T-cell (primary cell): ENCODE measurements at regions of chr6 and their contacts with region 1.

Region 1: GRCh38 chr6:161370880-161371279 is 97.0 kb upstream of the AGPAT4 start:
- DNase-seq: peak; percentile 25 to 80 (median 60)
- ATAC-seq: peak; percentile 69 to 89 (median 78)
- H3K4me3 ChIP-seq: no peak overlapping the region
- H3K4me3 Mint-ChIP-seq: no peak overlapping the region
- H3K27ac ChIP-seq: no peak overlapping the region
- H3K27ac Mint-ChIP-seq: no peak overlapping the region
- H3K4me1 ChIP-seq: no peaks in the 10 kb centered on the region
- H3K4me1 Mint-ChIP-seq: no peaks in the 10 kb centered on the region
- H3K27me3 ChIP-seq: no peaks in the 10 kb centered on the region
- H3K27me3 Mint-ChIP-seq: no peaks in the 10 kb centered on the region

Region 2: DNA sequence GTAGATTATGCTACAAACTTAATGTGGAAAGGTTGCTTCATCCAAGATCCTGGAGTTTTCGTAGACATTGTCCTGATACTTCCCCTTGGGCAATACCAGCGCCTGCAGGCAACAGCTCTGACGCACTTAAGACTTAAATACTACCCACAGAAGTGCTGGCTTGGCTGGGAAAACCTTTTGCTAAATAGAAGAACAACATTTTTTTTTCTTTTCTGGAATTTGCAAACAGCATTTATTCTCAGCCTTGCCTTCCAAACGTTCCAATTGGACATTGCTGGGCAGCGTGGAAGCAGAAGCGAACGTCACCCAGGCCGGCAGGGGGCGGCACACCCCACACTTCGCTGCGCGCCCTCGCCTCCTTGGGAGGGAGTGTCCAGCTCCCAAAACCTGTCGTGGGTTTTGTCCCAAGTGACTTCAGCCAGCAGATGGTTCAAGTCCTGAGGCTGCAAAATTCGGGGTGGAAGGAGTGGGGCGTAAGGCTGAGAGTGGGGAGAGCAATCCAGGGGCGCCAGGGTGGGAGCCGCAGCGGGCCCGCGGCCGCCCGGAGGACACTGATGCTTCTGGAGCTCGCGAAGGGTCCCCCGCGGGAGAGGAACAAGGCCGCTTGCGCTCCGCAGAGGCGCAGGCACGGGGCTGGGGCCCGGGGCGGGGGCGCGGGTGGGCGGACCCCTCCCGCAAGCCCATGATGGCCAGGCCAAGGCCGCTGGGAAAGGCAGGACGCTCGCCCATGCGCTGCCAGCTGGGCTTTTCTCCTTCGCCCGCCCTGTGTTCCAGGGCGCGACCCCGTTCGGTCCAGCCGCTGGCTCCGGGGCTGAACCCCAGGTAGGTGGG is 440.1 kb before region 1 on chr6:
- CTCF ChIA-PET with region 1: interaction called, 19 to 138 read pairs
- POLR2A ChIA-PET with region 1: no interaction called
- DNase-seq: peak in 31 of 35 experiments; percentile 1 to 69 (median 32)
- ATAC-seq: peak; percentile 47 to 69 (median 57)
- H3K4me3 ChIP-seq: peak overlapping the region; percentile 23 to 33
- H3K4me3 Mint-ChIP-seq: peak overlapping the region; percentile 11 to 50 (median 49)
- H3K27ac ChIP-seq: no peak overlapping the region
- H3K27ac Mint-ChIP-seq: no peak overlapping the region
- H3K4me1 ChIP-seq: peaks cover 0 to 9% of the 10 kb centered on the region in 2 experiments
- H3K4me1 Mint-ChIP-seq: peaks cover 0 to 11% (median 6%) of the 10 kb centered on the region in 3 donors
- H3K27me3 ChIP-seq: peaks cover 12 to 29% of the 10 kb centered on the region in 2 experiments
- H3K27me3 Mint-ChIP-seq: peaks cover 22 to 36% of the 10 kb centered on the region in 2 donors

Region 3: GRCh38 chr6:161101517-161101916 is 269.4 kb before region 1 on chr6:
- CTCF ChIA-PET with region 1: interaction called, 3 to 10 read pairs
- POLR2A ChIA-PET with region 1: no interaction called
- DNase-seq: peak in 1 of 35 experiments; percentile 15
- ATAC-seq: no peak
- H3K4me3 ChIP-seq: no peak overlapping the region
- H3K4me3 Mint-ChIP-seq: no peak overlapping the region
- H3K27ac ChIP-seq: no peak overlapping the region
- H3K27ac Mint-ChIP-seq: no peak overlapping the region
- H3K4me1 ChIP-seq: no peaks in the 10 kb centered on the region
- H3K4me1 Mint-ChIP-seq: no peaks in the 10 kb centered on the region
- H3K27me3 ChIP-seq: no peaks in the 10 kb centered on the region
- H3K27me3 Mint-ChIP-seq: no peaks in the 10 kb centered on the region

Region 4: DNA sequence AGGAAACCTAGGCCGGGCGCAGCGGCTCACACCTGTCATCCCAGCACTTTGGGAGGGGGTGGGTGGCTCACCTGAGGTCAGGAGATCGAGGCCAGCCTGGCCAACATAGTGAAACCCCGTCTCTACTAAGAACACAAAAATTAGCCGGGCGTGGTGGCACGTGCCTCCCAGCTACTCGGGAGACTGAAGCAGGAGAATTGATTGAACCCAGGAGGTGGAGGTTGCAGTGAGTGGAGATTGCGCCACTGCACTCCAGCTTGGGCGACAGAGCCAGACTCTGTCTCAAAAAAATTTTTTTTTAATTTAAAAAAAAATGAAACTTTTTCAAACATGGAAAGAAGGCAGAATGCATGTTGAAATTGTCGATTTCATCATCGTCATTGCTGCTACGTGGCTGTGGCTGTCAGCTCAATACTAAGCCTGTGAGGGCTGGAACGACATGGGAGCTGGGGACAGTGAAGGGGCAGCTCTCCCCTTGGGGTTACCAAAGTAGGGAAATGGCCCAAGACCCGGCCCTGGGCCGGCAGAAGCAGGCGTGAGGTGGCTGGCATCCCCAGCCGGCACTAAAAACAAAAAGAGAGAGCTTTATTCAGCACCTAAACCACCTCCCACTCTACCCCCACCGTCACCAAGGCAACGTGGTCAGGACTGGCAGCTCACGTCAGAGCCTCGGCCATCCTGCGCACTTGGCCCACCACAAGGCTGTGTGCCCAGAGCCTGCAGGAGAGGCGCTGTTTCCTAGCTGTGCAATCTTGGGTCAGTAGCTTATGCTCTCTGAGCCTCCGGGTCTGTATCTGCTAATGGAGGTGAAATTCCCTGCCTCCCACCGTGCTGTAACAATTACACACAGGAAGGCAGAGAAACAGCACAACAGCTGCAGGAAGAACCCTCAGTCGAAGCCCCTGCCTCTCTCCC is 127.8 kb before region 1 on chr6:
- CTCF ChIA-PET with region 1: interaction called in 1 of 2 experiments, 13 read pairs
- POLR2A ChIA-PET with region 1: interaction called in 1 of 2 experiments, 6 read pairs
- DNase-seq: peak in 34 of 35 experiments; percentile 22 to 88 (median 64)
- ATAC-seq: peak in 3 of 4 experiments; percentile 50 to 80 (median 77)
- H3K4me3 ChIP-seq: no peak overlapping the region
- H3K4me3 Mint-ChIP-seq: no peak overlapping the region
- H3K27ac ChIP-seq: peak overlapping the region; percentile 42
- H3K27ac Mint-ChIP-seq: peak overlapping the region in 1 of 2 donors; percentile 21
- H3K4me1 ChIP-seq: peaks cover 0 to 16% of the 10 kb centered on the region in 2 experiments
- H3K4me1 Mint-ChIP-seq: peaks cover 0 to 14% (median 6%) of the 10 kb centered on the region in 3 donors
- H3K27me3 ChIP-seq: no peaks in the 10 kb centered on the region
- H3K27me3 Mint-ChIP-seq: no peaks in the 10 kb centered on the region

Region 5: DNA sequence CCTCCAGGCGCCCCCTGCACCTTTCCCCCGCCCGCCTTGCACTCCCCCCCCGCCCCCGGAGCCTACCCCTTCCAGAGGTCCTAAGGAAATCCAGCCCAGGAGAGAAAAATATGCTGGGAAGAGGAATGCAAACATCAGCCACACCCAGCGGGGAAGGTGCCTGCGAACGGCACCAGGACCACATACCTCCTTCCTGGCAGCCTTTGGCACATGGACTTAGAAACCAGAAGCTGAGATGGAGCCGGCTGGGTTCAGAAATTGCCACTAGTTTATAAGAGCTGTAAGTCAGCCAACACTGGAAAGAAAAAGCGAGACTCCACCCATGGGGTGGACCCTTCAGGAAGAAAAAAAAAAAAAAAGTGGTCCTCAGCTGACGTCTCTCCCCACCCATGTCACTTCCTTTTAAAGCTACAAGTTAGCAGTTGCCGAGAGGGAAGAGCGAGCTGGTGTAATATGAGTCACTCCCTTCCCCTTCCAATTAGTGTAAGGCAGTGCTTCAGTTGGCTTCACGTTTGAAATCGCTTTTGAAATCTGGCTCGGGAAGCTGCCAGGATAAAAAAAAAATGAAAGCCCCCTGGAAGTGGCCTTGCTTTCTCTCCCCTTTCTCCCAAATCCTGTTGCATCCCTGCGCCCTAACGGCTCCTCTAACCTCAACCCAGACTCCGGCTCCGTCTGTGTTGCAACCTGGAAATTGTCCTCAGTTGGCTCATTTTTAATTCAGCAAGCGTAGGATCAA is 97.0 kb before region 1 on chr6 and contains the start of gene AGPAT4:
- CTCF ChIA-PET with region 1: interaction called, 7 to 13 read pairs
- POLR2A ChIA-PET with region 1: interaction called in 1 of 2 experiments, 9 read pairs
- DNase-seq: peak; percentile 20 to 90 (median 63)
- ATAC-seq: peak; percentile 91 to 97 (median 93)
- H3K4me3 ChIP-seq: peak within 1 kb of the TSS; percentile 61 to 74
- H3K4me3 Mint-ChIP-seq: peak within 1 kb of the TSS; percentile 86 to 97 (median 88)
- H3K27ac ChIP-seq: peak within 1 kb of the TSS; percentile 81
- H3K27ac Mint-ChIP-seq: peak within 1 kb of the TSS; percentile 90 to 91
- H3K4me1 ChIP-seq: peaks cover 8 to 14% of the 10 kb centered on the region in 2 experiments
- H3K4me1 Mint-ChIP-seq: peaks cover 22 to 31% (median 30%) of the 10 kb centered on the region in 3 donors
- H3K27me3 ChIP-seq: no peaks in the 10 kb centered on the region
- H3K27me3 Mint-ChIP-seq: no peaks in the 10 kb centered on the region
- total RNA-seq, gene AGPAT4: 5.6 to 15.0 (median 6.3) TPM

Region 6: GRCh38 chr6:161356167-161356854 is 14.6 kb before region 1 on chr6:
- CTCF ChIA-PET with region 1: interaction called, 4 to 11 read pairs
- POLR2A ChIA-PET with region 1: no interaction called
- DNase-seq: no peak
- ATAC-seq: no peak
- H3K4me3 ChIP-seq: no peak overlapping the region
- H3K4me3 Mint-ChIP-seq: no peak overlapping the region
- H3K27ac ChIP-seq: no peak overlapping the region
- H3K27ac Mint-ChIP-seq: no peak overlapping the region
- H3K4me1 ChIP-seq: no peaks in the 10 kb centered on the region
- H3K4me1 Mint-ChIP-seq: no peaks in the 10 kb centered on the region
- H3K27me3 ChIP-seq: peaks cover 0 to 4% of the 10 kb centered on the region in 2 experiments
- H3K27me3 Mint-ChIP-seq: no peaks in the 10 kb centered on the region